Right ventricle myocardium superior (tissue), 1 donor: ENCODE measurements at regions of chr10 and their contacts with region 1.

Region 1: GRCh38 chr10:73997787-73998622 is at the start of gene VCL:
- DNase-seq: peak; percentile 99
- ATAC-seq: peak; percentile 95
- total RNA-seq, gene VCL: 194 TPM

Region 2: DNA sequence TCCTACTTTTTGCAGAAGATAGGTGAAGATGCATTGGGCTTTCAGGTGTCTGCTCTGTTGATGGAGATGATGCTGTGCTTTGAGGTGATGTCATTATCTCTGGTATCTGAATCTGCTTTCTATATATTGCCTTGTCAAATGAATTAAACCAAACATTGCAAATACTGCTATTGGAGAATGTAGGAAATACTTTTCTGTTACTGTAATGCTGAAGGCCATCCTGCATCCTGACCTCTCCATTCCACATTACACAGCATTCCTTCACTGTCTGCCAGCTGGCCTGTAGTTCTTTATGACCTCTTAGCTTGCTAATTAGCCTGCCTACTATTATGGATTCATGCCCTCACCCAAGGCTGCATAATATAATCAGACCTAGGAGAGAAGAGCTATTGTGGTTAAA is 73.2 kb after region 1 on chr10:
- intact Hi-C with region 1: loop called (anchors 5 kb)
- DNase-seq: no peak
- ATAC-seq: peak; percentile 85

Region 3: GRCh38 chr10:75210282-75211006 is 1212.4 kb after region 1 on chr10 and contains the start of gene VDAC2:
- intact Hi-C with region 1: no loop called
- DNase-seq: peak; percentile 95
- ATAC-seq: peak; percentile 98
- total RNA-seq, gene VDAC2: 486 TPM